ENCODE measurements at regions of chrX and their contacts with region 1.

Region 1: GRCh38 chrX:53071604-53072417 is 10.4 kb upstream of the TSPYL2 start:
- DNase-seq: peak; percentile 56 to 76
- ATAC-seq: peak; percentile 78 to 90
- H3K4me3 ChIP-seq: peak overlapping the region; percentile 55
- H3K27ac ChIP-seq: peak overlapping the region; percentile 65 to 74; a peak in 5 of 6 replicates
- H3K4me1 ChIP-seq: peaks cover 15% of the 10 kb centered on the region; the same call in 2 of the 3 replicates
- CTCF ChIP-seq: peak; percentile 78
- EP300 ChIP-seq: no peak
- POLR2A ChIP-seq: no peak
- RAD21 ChIP-seq: peak; percentile 78 to 80

Region 2: GRCh38 chrX:53088136-53088974 is 16.5 kb after region 1 on chrX:
- CTCF ChIA-PET with region 1: interaction called, 28 read pairs
- POLR2A ChIA-PET with region 1: interaction called, 4 read pairs
- DNase-seq: peak; percentile 31 to 66
- ATAC-seq: peak; percentile 40 to 66; a peak in 5 of 6 replicates
- H3K4me3 ChIP-seq: peak overlapping the region; percentile 29
- H3K27ac ChIP-seq: peak overlapping the region; percentile 44 to 64; a peak in 2 of 6 replicates
- H3K4me1 ChIP-seq: peaks cover 8% of the 10 kb centered on the region; the same call in 2 of the 3 replicates
- CTCF ChIP-seq: no peak
- EP300 ChIP-seq: no peak
- POLR2A ChIP-seq: no peak
- RAD21 ChIP-seq: no peak

Measured in A549 (cell line).